IMR-90 (cell line): ENCODE measurements at regions of chr4 and their contacts with region 1.

Region 1: DNA sequence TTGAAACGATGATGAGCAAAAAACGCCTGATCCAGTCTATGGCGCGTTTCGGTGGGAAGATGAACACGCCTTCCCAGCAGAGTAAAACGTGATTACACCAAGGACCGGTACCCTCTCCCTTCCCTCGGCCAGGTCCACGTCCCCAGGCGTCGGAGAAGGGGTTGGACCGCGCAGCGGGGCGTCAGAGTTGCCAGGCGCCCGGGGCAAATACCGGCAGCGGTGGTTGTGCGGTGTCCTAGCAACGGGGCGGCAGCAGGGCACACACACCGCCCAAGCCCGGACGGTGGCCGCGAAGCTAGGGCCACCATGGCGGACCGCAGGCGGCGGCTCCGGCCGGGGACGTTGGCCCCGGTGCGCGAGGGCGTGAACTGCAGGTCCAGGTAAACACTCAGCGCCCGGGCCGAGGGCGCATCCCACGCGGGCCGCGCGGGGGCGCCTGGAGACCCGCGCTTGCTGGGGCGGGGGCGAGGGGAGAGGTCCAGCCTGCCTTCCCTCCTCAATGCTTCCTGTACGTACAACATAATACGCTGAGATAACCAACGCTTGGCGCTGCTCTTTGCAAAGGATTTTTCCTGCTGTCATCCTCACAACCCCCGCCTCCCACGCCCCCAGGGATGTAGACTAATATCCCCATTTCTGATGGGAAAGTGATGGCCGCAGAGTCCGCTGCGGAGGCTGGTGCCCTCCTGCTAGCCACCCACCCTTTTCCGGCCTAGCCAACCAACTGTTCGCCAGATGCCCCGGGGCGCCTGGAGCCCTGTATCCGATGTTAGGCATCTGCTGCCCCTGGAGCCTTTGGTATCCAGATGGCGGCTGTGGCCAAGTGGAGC is at the start of gene FAM47E:
- DNase-seq: peak; percentile 6
- ATAC-seq: peak; percentile 79
- H3K4me3 ChIP-seq: peak within 1 kb of the TSS; percentile 47
- H3K27ac ChIP-seq: no peak within 1 kb of the TSS
- H3K4me1 ChIP-seq: no peaks in the 10 kb centered on the region
- H3K27me3 ChIP-seq: peaks cover 54% of the 10 kb centered on the region
- CTCF ChIP-seq: 0 out of 2 replicates have a peak, but pooled peaks have one; percentile 12
- POLR2A ChIP-seq: no peak
- RAD21 ChIP-seq: no peak
- total RNA-seq, gene FAM47E: under 0.01 TPM in 1 of 2 replicates, not detected in the other

Region 2: GRCh38 chr4:76275486-76276124 is 23.9 kb after region 1 on chr4:
- CTCF ChIA-PET with region 1: no interaction called
- POLR2A ChIA-PET with region 1: no interaction called
- dilution Hi-C with region 1: no loop called
- in situ Hi-C with region 1: no loop called
- intact Hi-C with region 1: loop called (anchors 1 kb)
- DNase-seq: no peak
- ATAC-seq: no peak
- H3K4me3 ChIP-seq: no peak overlapping the region
- H3K27ac ChIP-seq: no peak overlapping the region
- H3K4me1 ChIP-seq: no peaks in the 10 kb centered on the region
- H3K27me3 ChIP-seq: peaks cover 39% of the 10 kb centered on the region
- CTCF ChIP-seq: no peak
- POLR2A ChIP-seq: no peak
- RAD21 ChIP-seq: no peak

Region 3: GRCh38 chr4:76373919-76374552 is 122.4 kb after region 1 on chr4:
- CTCF ChIA-PET with region 1: no interaction called
- POLR2A ChIA-PET with region 1: no interaction called
- dilution Hi-C with region 1: no loop called
- in situ Hi-C with region 1: no loop called
- intact Hi-C with region 1: no loop called
- DNase-seq: no peak
- ATAC-seq: no peak
- H3K4me3 ChIP-seq: no peak overlapping the region
- H3K27ac ChIP-seq: no peak overlapping the region
- H3K4me1 ChIP-seq: no peaks in the 10 kb centered on the region
- H3K27me3 ChIP-seq: peaks cover 13% of the 10 kb centered on the region
- CTCF ChIP-seq: no peak
- POLR2A ChIP-seq: no peak
- RAD21 ChIP-seq: no peak

Region 4: GRCh38 chr4:77899607-77900006 is 1648.0 kb after region 1 on chr4:
- CTCF ChIA-PET with region 1: no interaction called
- POLR2A ChIA-PET with region 1: no interaction called
- dilution Hi-C with region 1: no loop called
- in situ Hi-C with region 1: no loop called
- intact Hi-C with region 1: no loop called
- DNase-seq: no peak
- ATAC-seq: no peak; the same call in 1 of the 2 replicates
- H3K4me3 ChIP-seq: no peak overlapping the region
- H3K27ac ChIP-seq: no peak overlapping the region
- H3K4me1 ChIP-seq: no peaks in the 10 kb centered on the region
- H3K27me3 ChIP-seq: no peaks in the 10 kb centered on the region
- CTCF ChIP-seq: no peak
- POLR2A ChIP-seq: no peak
- RAD21 ChIP-seq: no peak